H1 (cell line): ENCODE measurements at regions of chr5 and their contacts with region 1.

Region 1: GRCh38 chr5:8340739-8341344 is 471.9 kb downstream of the MTRR start:
- DNase-seq: peak in 1 of 2 experiments; percentile 48
- H3K4me3 ChIP-seq: no peak overlapping the region
- H3K27ac ChIP-seq: no peak overlapping the region
- H3K4me1 ChIP-seq: peaks cover 0 to 2% (median 0%) of the 10 kb centered on the region in 4 experiments; a peak in 2 of 7 replicates
- H3K27me3 ChIP-seq: no peaks in the 10 kb centered on the region
- CTCF ChIP-seq: peak in 2 of 3 experiments; percentile 24 to 51; a peak in 2 of 4 replicates
- EP300 ChIP-seq: no peak
- POLR2A ChIP-seq: no peak
- RAD21 ChIP-seq: peak; percentile 49 to 55

Region 2: DNA sequence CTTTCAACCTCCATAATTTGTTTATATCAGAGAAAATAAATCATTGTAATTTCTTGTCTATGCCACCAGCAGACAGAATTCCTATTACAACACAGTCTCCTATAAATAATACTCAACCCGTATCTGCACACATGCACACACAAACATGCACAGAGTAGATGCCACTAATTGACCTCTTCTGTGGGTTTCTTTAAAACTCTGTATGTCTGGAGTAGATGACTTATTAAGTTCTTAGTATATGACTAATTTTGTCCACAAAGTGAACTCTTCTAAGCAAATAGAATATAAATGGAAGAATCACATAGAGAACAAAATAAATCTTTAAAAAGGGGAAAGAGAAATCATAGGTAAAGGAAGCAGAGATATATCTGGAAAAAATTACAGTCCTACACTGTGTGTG is 19.6 kb before region 1 on chr5:
- CTCF ChIA-PET with region 1: interaction called, 12 read pairs
- POLR2A ChIA-PET with region 1: no interaction called
- DNase-seq: no peak
- H3K4me3 ChIP-seq: no peak overlapping the region
- H3K27ac ChIP-seq: no peak overlapping the region
- H3K4me1 ChIP-seq: no peaks in the 10 kb centered on the region
- H3K27me3 ChIP-seq: no peaks in the 10 kb centered on the region
- CTCF ChIP-seq: no peak
- EP300 ChIP-seq: no peak
- POLR2A ChIP-seq: no peak
- RAD21 ChIP-seq: no peak

Region 3: DNA sequence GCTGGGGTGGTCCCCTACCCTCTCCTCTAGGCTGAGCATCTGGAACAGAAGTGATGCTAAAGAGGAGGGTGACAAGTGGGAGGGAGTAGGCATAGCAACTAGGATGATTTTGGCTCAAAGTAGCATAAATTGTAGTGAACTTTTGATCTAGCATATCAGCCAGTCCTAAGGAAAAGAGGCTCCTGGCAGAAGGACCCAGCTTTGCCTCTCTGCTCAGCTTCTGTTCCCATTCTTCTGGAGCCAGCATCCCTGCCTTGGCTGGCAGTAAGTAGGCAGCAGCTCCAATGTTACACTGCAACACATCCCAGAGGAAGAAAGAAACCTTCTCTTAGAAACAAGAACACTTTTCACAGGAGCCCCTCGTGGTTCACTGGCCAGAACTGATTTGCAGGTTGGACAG is 15.1 kb after region 1 on chr5:
- CTCF ChIA-PET with region 1: interaction called, 10 read pairs
- POLR2A ChIA-PET with region 1: no interaction called
- DNase-seq: no peak
- H3K4me3 ChIP-seq: no peak overlapping the region
- H3K27ac ChIP-seq: no peak overlapping the region
- H3K4me1 ChIP-seq: no peaks in the 10 kb centered on the region
- H3K27me3 ChIP-seq: no peaks in the 10 kb centered on the region
- CTCF ChIP-seq: no peak
- EP300 ChIP-seq: no peak
- POLR2A ChIP-seq: no peak
- RAD21 ChIP-seq: no peak